ENCODE measurements at regions of chr11 and their contacts with region 1.

Region 1: GRCh38 chr11:20647976-20648565 is 21.3 kb upstream of the NELL1 start:
- DNase-seq: peak; percentile 75
- H3K4me3 Mint-ChIP-seq: no peak overlapping the region
- H3K27ac Mint-ChIP-seq: no peak overlapping the region
- H3K4me1 Mint-ChIP-seq: no peaks in the 10 kb centered on the region
- H3K27me3 Mint-ChIP-seq: peaks cover 37% of the 10 kb centered on the region
- CTCF ChIP-seq: peak; percentile 84

Region 2: GRCh38 chr11:20303343-20303965 is 344.6 kb before region 1 on chr11:
- CTCF ChIA-PET with region 1: no interaction called
- POLR2A ChIA-PET with region 1: no interaction called
- intact Hi-C with region 1: no loop called
- DNase-seq: no peak
- H3K4me3 Mint-ChIP-seq: no peak overlapping the region
- H3K27ac Mint-ChIP-seq: no peak overlapping the region
- H3K4me1 Mint-ChIP-seq: no peaks in the 10 kb centered on the region
- H3K27me3 Mint-ChIP-seq: peaks cover 80% of the 10 kb centered on the region
- CTCF ChIP-seq: no peak

Region 3: GRCh38 chr11:20599221-20600019 is 48.7 kb before region 1 on chr11 and contains the start of gene SLC6A5:
- CTCF ChIA-PET with region 1: no interaction called
- POLR2A ChIA-PET with region 1: no interaction called
- intact Hi-C with region 1: no loop called
- DNase-seq: peak; percentile 65
- H3K4me3 Mint-ChIP-seq: no peak within 1 kb of the TSS
- H3K27ac Mint-ChIP-seq: no peak within 1 kb of the TSS
- H3K4me1 Mint-ChIP-seq: peaks cover 6% of the 10 kb centered on the region
- H3K27me3 Mint-ChIP-seq: peaks cover 92% of the 10 kb centered on the region
- CTCF ChIP-seq: no peak
- total RNA-seq, gene SLC6A5: not detected in 2 replicates

Region 4: DNA sequence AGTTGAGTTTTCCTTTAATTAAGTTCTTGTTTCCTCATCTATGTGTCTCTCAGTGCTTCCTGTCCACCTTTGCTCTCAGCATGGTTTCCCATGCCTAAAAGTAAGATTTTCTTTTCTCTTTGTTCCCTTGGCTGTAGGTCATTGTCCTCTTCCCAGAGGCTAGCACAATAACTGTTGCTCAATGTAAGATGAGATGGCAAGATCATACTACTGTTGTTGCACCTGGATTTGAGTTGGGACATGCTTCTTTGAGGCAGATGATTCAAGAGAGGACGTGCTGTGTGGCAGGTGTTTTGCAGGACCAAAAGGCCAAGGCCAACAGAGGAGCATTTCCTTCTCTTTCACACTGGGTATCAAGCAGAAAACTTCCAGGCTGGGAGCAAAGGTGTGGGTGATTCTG is 10.1 kb after region 1 on chr11:
- CTCF ChIA-PET with region 1: interaction called, 18 read pairs
- POLR2A ChIA-PET with region 1: interaction called, 3 read pairs
- intact Hi-C with region 1: no loop called
- DNase-seq: no peak
- H3K4me3 Mint-ChIP-seq: no peak overlapping the region
- H3K27ac Mint-ChIP-seq: no peak overlapping the region
- H3K4me1 Mint-ChIP-seq: no peaks in the 10 kb centered on the region
- H3K27me3 Mint-ChIP-seq: peaks cover 51% of the 10 kb centered on the region
- CTCF ChIP-seq: no peak

Region 5: GRCh38 chr11:20671856-20672546 is 23.9 kb after region 1 on chr11:
- CTCF ChIA-PET with region 1: interaction called, 30 read pairs
- POLR2A ChIA-PET with region 1: no interaction called
- intact Hi-C with region 1: loop called (anchors 1 kb)
- DNase-seq: peak; percentile 21
- H3K4me3 Mint-ChIP-seq: no peak overlapping the region
- H3K27ac Mint-ChIP-seq: no peak overlapping the region
- H3K4me1 Mint-ChIP-seq: no peaks in the 10 kb centered on the region
- H3K27me3 Mint-ChIP-seq: peaks cover 56% of the 10 kb centered on the region
- CTCF ChIP-seq: no peak

Region 6: DNA sequence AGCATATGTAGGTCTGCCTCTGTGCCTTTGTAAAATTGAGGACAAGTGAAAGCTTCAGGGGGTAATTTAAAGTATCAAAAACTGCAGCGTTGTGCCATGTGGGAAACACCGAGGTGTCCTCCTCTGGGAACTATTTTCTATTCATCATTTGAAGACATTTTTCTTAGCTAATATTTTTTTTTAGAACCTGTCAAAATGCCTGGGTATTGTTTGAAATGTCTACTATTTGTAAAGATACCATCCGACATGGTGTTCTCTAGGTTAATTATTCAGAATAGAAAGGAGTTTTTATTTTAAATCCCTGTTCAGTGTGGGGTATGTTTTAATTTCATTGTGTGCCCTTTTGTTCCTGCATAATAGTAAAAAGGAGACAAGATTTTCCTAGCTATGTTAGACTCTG is 512.1 kb after region 1 on chr11:
- CTCF ChIA-PET with region 1: no interaction called
- POLR2A ChIA-PET with region 1: no interaction called
- intact Hi-C with region 1: no loop called
- DNase-seq: no peak
- H3K4me3 Mint-ChIP-seq: no peak overlapping the region
- H3K27ac Mint-ChIP-seq: no peak overlapping the region
- H3K4me1 Mint-ChIP-seq: no peaks in the 10 kb centered on the region
- H3K27me3 Mint-ChIP-seq: no peaks in the 10 kb centered on the region
- CTCF ChIP-seq: no peak

Region 7: DNA sequence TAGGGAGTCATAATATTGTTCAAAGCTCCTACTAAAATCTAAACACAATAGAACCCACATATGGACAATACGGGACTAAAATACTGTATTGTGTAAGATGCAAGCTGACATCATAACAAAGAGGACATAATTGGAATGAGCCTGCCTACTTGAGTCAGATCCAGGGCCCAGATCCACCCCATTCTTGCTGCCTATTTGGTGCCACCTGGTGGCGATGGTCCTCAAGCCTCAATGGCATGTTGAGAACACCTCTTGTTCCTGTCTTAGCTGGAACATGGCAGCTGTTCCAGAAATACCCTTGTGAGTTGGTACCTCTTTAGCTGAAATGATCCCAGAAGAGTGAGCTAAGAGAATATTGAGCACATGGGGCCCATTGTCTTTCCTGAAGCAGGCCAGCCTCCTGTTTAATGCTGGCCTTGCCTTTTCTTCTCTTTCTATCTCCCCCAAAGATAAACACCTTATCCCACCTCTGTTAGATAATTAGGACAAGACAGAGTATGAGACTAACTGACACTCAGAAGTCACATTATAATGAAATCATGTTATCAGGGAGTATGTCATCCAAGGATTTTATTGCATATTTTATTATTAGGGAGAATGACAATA is 863.9 kb after region 1 on chr11:
- CTCF ChIA-PET with region 1: interaction called, 26 read pairs
- POLR2A ChIA-PET with region 1: no interaction called
- intact Hi-C with region 1: loop called (anchors 2 kb)
- DNase-seq: peak; percentile 44
- H3K4me3 Mint-ChIP-seq: no peak overlapping the region
- H3K27ac Mint-ChIP-seq: no peak overlapping the region
- H3K4me1 Mint-ChIP-seq: no peaks in the 10 kb centered on the region
- H3K27me3 Mint-ChIP-seq: no peaks in the 10 kb centered on the region
- CTCF ChIP-seq: no peak

Region 8: DNA sequence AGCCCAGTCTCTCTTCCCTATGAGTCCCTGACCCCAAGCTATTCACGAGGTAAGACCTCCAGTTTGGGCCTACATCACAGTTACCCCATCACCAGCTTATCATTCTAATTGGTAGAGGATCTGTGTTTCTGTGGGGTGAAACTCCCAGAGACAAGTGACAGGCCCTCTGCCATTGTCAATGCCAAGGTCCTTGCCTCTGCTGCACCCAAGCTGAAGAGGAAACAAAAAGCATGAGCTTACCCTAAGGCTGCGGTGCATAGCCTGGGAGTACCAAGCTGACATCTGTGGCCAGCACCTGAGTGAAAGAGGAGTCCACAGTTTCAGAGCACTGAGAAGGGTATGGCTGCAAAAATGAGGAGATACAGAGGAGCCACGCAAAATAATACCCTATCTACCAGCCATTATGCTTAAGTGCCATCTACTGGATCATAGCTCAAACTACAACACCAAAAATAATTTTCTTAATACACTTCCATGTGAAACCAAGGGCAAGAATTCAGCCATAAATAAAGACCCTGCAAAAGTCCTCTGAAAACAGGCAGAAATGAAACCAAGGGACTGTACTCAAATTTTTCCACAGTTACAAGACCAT is 1482.5 kb after region 1 on chr11:
- CTCF ChIA-PET with region 1: interaction called, 11 read pairs
- POLR2A ChIA-PET with region 1: no interaction called
- intact Hi-C with region 1: no loop called
- DNase-seq: peak; percentile 0
- H3K4me3 Mint-ChIP-seq: no peak overlapping the region
- H3K27ac Mint-ChIP-seq: no peak overlapping the region
- H3K4me1 Mint-ChIP-seq: no peaks in the 10 kb centered on the region
- H3K27me3 Mint-ChIP-seq: no peaks in the 10 kb centered on the region
- CTCF ChIP-seq: no peak

Region 9: DNA sequence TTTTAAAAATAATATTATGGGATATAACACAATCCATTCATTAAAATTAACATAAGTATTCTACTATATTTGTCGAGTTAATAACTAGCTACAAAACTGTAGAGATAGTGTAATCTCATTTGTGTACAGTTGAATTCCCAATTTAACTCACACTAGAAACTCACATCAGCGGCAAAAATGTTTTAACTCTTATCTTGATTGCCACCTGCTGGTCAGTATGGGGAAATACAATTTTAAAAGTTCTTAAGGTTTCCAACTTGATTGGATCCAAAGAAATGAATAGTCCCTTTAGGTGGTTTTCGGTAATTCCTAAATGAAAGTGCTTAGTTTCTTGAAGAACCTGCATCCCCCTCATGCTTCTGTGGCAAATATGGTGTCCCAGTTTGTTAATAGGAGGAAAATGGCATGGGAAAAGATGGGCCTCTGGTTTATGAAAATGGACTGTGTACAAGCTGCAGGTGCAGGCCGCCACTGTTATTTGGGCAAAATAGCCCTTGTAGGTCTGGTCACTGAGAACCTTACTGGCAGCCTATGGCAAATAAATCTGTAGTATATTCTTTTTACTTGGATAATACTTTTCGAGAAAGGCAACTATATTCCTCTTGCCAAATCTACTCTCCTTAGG is 1656.4 kb after region 1 on chr11:
- CTCF ChIA-PET with region 1: interaction called, 14 read pairs
- POLR2A ChIA-PET with region 1: no interaction called
- intact Hi-C with region 1: loop called (anchors 2 kb)
- DNase-seq: peak; percentile 36
- H3K4me3 Mint-ChIP-seq: no peak overlapping the region
- H3K27ac Mint-ChIP-seq: no peak overlapping the region
- H3K4me1 Mint-ChIP-seq: no peaks in the 10 kb centered on the region
- H3K27me3 Mint-ChIP-seq: peaks cover 49% of the 10 kb centered on the region
- CTCF ChIP-seq: peak; percentile 44